ENCODE measurements at regions of chr2 and their contacts with region 1.

Region 1: DNA sequence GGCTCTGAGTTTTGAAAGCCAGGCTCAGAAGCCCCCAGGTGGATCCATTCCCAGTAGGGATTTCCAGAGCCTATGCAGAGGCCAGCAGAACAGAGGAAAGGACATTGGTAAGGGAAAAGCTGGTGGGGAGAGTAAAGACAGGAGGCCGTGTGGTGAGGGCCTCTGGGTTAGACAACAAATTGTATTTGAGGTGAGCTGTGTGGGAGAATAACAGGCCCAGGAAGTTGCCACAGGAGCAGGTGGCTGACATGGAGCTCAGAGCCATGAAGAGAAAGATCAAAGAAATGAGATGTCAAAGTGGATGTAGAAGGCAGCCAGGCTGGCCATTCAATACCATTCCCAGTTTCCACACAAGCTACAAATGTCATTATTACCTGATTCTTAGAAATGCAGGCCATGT is 8.8 kb downstream of the BUB1 start:
- DNase-seq: no peak
- H3K4me3 ChIP-seq: no peak overlapping the region
- H3K27ac ChIP-seq: no peak overlapping the region
- H3K4me1 ChIP-seq: no peaks in the 10 kb centered on the region
- CTCF ChIP-seq: no peak

Region 2: DNA sequence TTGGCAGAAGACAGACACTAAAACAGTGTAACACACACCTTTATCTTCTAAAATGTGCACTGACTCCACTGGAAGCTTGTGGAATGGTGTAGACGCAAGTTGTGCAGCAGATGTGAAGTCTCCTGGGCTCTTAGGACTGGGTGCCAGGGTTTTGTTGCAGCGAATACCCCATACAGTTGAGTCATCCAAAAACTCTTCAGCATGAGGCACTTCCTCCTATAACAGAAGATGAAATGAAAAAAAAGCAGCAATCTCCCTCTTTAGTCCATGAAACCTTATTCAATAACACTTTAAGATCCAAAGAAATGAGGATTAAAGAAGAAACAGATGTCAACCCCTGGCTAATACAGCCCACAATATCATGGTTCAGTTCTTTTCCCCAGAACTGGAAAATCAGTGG is 13.4 kb before region 1 on chr2:
- CTCF ChIA-PET with region 1: no interaction called
- POLR2A ChIA-PET with region 1: no interaction called
- intact Hi-C with region 1: loop called (anchors 2 kb)
- DNase-seq: no peak
- H3K4me3 ChIP-seq: no peak overlapping the region
- H3K27ac ChIP-seq: no peak overlapping the region
- H3K4me1 ChIP-seq: no peaks in the 10 kb centered on the region
- CTCF ChIP-seq: no peak

Region 3: GRCh38 chr2:110828330-110828729 is 159.3 kb after region 1 on chr2:
- CTCF ChIA-PET with region 1: no interaction called
- POLR2A ChIA-PET with region 1: no interaction called
- intact Hi-C with region 1: no loop called
- DNase-seq: no peak
- H3K4me3 ChIP-seq: no peak overlapping the region
- H3K27ac ChIP-seq: no peak overlapping the region
- H3K4me1 ChIP-seq: no peaks in the 10 kb centered on the region
- CTCF ChIP-seq: no peak

Region 4: DNA sequence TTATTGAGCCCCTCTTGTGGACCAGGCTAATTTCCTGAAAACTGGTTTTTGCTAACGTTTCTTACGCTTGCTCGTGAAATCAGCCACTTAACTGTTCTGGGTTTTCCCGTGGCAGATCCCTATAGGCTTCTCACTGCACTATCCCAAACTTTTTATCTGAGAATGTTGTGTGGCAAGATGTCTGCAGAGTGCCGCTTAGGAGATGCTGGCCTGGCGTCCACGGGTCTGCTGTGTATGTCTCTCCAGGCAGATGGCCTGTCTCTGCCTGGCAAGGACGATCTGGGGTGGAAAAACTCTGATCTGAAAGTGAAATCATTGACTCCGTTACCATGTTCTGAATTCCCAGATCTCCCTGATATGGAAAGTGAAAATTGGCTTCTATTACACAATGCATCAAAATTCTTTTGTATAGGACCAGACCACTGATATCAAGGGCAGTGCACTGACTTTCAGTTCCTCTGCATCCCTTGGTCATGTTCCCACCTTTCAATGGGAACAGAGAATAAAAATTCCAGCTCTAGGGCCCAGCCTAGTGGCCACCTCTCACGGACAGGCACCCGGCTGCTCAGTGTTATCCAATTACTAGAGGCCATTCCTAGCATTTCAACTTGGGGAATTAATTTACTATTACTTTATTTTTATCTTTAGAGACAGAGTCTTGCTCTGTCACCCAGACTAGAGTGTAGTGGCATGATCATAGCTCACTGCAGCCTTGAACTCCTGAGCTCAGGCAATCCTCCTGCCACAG is 217.9 kb after region 1 on chr2:
- CTCF ChIA-PET with region 1: no interaction called
- POLR2A ChIA-PET with region 1: no interaction called
- intact Hi-C with region 1: no loop called
- DNase-seq: no peak
- H3K4me3 ChIP-seq: no peak overlapping the region
- H3K27ac ChIP-seq: no peak overlapping the region
- H3K4me1 ChIP-seq: no peaks in the 10 kb centered on the region
- CTCF ChIP-seq: no peak

Region 5: GRCh38 chr2:112092286-112093041 is 1423.4 kb after region 1 on chr2:
- CTCF ChIA-PET with region 1: no interaction called
- POLR2A ChIA-PET with region 1: no interaction called
- intact Hi-C with region 1: no loop called
- DNase-seq: no peak
- H3K4me3 ChIP-seq: no peak overlapping the region
- H3K27ac ChIP-seq: no peak overlapping the region
- H3K4me1 ChIP-seq: peaks cover 6% of the 10 kb centered on the region
- CTCF ChIP-seq: no peak